ENCODE measurements at regions of chr1 and their contacts with region 1.

Region 1: DNA sequence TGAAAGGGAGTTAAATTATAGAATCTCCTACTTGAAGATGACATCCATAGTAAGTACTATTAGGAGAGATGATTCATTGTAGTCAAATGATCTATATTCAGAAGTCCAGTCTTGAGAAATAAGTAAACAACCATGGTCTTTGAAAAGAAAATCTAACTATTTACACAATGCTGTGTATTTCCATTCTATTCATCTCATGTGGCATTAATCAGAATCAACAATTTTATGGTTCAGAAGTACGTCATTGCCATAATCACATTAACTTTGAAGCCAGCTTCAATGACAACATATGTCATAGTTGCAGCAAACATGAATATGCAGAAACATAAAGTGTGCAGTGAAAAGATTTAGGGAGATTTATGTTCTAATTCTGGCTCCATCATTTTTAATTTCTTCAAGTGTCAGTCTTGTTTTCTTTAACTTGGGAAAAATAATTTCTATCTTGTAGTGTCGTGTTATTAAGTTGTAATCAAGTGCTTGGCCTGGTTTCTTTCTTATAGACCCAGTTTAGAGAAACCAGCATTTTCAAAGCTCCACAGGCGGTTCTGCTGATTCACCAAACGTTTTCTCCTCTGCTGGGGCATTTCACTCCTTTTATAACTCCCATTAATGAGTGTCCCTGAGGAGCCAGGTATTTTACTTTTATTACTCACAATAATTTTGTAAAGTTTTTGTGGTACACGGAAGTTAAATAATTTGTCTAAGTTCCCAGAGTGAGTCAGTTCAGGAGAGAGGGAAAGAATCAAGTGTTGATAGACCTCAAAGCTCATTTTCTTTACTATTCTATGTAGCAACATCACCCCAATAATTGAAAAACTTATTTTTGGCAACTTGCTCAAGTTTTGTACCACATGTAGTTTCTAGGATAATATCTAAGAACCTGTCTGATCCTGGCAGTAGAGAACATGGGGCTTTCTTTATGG is 35.9 kb upstream of the PTGS2 start:
- DNase-seq: no peak
- H3K4me3 ChIP-seq: no peak overlapping the region
- H3K27ac ChIP-seq: no peak overlapping the region
- H3K27me3 ChIP-seq: no peaks in the 10 kb centered on the region
- CTCF ChIP-seq: no peak

Region 2: DNA sequence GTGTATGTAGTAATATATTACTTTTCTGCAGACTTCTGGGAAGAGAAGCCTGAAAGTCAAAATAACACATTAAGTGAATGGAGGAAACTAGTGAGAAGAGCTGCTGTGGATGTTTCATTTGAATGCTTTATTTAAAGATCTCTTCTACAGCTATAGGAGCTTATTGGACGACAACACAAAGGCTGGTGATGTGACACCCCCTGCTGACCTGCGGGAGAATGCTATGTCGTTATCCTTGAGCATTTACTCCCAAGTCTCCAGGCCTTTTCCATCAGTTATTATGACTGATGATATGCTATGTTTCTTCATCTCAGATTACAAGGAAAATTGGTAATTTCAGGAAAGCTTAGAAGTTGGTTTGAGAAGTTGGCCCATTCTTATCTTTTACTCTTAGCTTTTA is 90.3 kb after region 1 on chr1:
- CTCF ChIA-PET with region 1: no interaction called
- POLR2A ChIA-PET with region 1: no interaction called
- DNase-seq: no peak
- H3K4me3 ChIP-seq: no peak overlapping the region
- H3K27ac ChIP-seq: no peak overlapping the region
- H3K27me3 ChIP-seq: no peaks in the 10 kb centered on the region
- CTCF ChIP-seq: peak; percentile 15; the same call in 1 of the 2 replicates

Region 3: DNA sequence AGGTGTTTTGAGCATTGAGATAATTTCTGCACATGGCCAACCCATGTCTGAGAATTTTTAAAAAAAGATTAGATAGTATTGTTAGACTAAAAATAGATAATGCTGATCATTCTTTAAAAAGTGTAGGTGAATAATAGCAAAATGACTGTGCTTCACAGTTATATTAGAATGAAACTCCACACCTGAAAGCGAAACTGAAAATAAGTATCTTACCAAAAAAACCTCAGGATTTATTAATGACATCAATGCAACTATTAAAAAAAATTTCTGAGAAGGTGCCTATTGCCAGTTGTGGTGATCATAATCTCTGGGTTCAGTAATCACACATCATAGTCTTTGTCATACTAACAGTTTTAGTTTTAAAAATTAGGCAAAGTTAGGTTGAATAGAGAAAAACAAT is 149.1 kb after region 1 on chr1:
- CTCF ChIA-PET with region 1: interaction called, 13 read pairs
- POLR2A ChIA-PET with region 1: no interaction called
- DNase-seq: no peak
- H3K4me3 ChIP-seq: no peak overlapping the region
- H3K27ac ChIP-seq: no peak overlapping the region
- H3K27me3 ChIP-seq: no peaks in the 10 kb centered on the region
- CTCF ChIP-seq: no peak

Region 4: DNA sequence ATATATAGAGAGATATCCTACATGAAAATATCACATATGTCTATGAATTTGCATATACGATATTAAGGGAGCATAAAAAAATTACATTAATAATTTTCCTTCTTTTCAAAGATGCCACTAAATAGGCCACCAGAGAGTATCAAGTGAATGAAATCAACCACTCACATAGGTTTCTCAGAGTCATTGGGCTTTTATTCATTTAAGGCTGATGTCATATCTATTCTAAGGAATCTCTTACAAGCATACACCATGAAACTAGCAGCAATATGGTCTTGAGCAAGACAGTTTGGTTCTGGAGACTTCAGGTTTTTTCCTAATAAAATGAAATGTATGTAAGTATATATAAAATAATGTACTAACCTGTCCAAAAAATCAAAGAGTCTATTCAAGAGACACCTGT is 533.0 kb after region 1 on chr1:
- CTCF ChIA-PET with region 1: no interaction called
- POLR2A ChIA-PET with region 1: no interaction called
- DNase-seq: no peak
- H3K4me3 ChIP-seq: no peak overlapping the region
- H3K27ac ChIP-seq: no peak overlapping the region
- H3K27me3 ChIP-seq: no peaks in the 10 kb centered on the region
- CTCF ChIP-seq: no peak

Measured in AG04450 (cell line).